Activated B cell treated with CpG ODN at 0.5 μM for 24 hours (primary cell): ENCODE measurements at regions of chr3 and their contacts with region 1.

Region 1: DNA sequence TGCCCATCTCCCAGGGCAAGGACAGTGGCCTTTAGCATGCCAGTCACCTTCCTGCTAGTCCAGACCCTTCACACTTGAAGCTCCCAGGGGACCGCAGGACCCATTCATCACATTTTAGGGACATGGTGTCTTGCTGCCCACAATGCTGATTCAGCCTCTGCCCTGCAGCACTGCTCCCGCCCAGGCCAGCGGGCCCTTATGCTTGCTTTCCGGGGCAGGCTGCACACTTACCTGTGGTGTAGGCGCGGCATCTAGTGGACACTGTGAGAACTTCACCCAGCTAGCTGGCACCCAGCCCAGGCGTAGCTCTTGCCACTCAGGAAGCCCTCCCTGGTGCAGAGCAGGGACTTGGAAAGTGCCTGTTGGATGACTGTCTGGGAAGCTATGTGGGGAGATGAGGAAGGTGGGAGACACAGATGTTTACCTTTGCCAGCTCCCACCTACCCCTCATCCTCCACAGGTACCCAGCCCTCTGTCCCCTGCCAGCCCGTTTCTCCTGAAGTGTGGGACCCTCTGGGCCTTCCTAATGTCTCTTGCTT is 26.2 kb upstream of the NR2C2 start:
- DNase-seq: peak; percentile 72
- ATAC-seq: peak; percentile 98
- H3K4me3 Mint-ChIP-seq: no peak overlapping the region
- H3K27ac Mint-ChIP-seq: no peak overlapping the region
- H3K4me1 Mint-ChIP-seq: no peaks in the 10 kb centered on the region
- H3K27me3 Mint-ChIP-seq: peaks cover 5% of the 10 kb centered on the region
- CTCF ChIP-seq: peak; percentile 40

Region 2: GRCh38 chr3:14203521-14204079 is 717.5 kb before region 1 on chr3:
- CTCF ChIA-PET with region 1: interaction called, 39 read pairs
- POLR2A ChIA-PET with region 1: no interaction called
- intact Hi-C with region 1: no loop called
- DNase-seq: no peak
- ATAC-seq: peak; percentile 74
- H3K4me3 Mint-ChIP-seq: no peak overlapping the region
- H3K27ac Mint-ChIP-seq: peak overlapping the region; percentile 10
- H3K4me1 Mint-ChIP-seq: peaks cover 5% of the 10 kb centered on the region
- H3K27me3 Mint-ChIP-seq: no peaks in the 10 kb centered on the region
- CTCF ChIP-seq: peak; percentile 25

Region 3: GRCh38 chr3:14508961-14509795 is 412.0 kb before region 1 on chr3:
- CTCF ChIA-PET with region 1: interaction called, 7 read pairs
- POLR2A ChIA-PET with region 1: no interaction called
- intact Hi-C with region 1: loop called (anchors 1 kb)
- DNase-seq: peak; percentile 47
- ATAC-seq: no peak
- H3K4me3 Mint-ChIP-seq: no peak overlapping the region
- H3K27ac Mint-ChIP-seq: no peak overlapping the region
- H3K4me1 Mint-ChIP-seq: no peaks in the 10 kb centered on the region
- H3K27me3 Mint-ChIP-seq: peaks cover 8% of the 10 kb centered on the region
- CTCF ChIP-seq: peak; percentile 74

Region 4: GRCh38 chr3:14672588-14672987 is 248.6 kb before region 1 on chr3:
- CTCF ChIA-PET with region 1: interaction called, 16 read pairs
- POLR2A ChIA-PET with region 1: no interaction called
- intact Hi-C with region 1: loop called (anchors 1 kb)
- DNase-seq: no peak
- ATAC-seq: no peak
- H3K4me3 Mint-ChIP-seq: no peak overlapping the region
- H3K27ac Mint-ChIP-seq: no peak overlapping the region
- H3K4me1 Mint-ChIP-seq: no peaks in the 10 kb centered on the region
- H3K27me3 Mint-ChIP-seq: no peaks in the 10 kb centered on the region
- CTCF ChIP-seq: no peak

Region 5: GRCh38 chr3:14791343-14791945 is 129.7 kb before region 1 on chr3:
- CTCF ChIA-PET with region 1: no interaction called
- POLR2A ChIA-PET with region 1: no interaction called
- intact Hi-C with region 1: loop called (anchors 2 kb)
- DNase-seq: no peak
- ATAC-seq: no peak
- H3K4me3 Mint-ChIP-seq: no peak overlapping the region
- H3K27ac Mint-ChIP-seq: no peak overlapping the region
- H3K4me1 Mint-ChIP-seq: no peaks in the 10 kb centered on the region
- H3K27me3 Mint-ChIP-seq: peaks cover 30% of the 10 kb centered on the region
- CTCF ChIP-seq: no peak

Region 6: DNA sequence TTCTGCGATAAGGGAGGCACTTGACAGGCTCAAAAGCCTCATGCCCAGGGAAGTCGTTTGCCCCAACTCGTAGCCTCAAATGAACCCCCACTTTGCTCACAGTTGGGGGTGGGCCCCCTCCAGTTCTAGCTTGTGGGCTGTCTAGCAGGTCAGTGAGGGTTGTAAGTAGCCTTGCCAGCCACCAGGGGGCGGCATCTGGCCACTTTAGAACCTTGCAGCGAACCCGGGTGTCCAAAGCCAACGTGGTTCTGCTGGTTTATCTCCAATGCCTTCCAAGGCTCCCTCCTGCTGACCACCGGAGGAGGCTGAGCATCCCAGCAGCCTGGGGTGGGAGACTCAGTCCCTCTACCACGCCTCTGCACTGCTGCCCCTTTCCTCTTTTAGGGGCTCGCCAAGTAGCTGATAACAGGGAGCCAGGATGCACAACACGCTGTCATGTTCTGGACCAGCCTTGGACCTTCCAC is 187.0 kb after region 1 on chr3:
- CTCF ChIA-PET with region 1: no interaction called
- POLR2A ChIA-PET with region 1: no interaction called
- intact Hi-C with region 1: loop called (anchors 1 kb)
- DNase-seq: peak; percentile 66
- ATAC-seq: peak; percentile 98
- H3K4me3 Mint-ChIP-seq: no peak overlapping the region
- H3K27ac Mint-ChIP-seq: no peak overlapping the region
- H3K4me1 Mint-ChIP-seq: peaks cover 2% of the 10 kb centered on the region
- H3K27me3 Mint-ChIP-seq: peaks cover 7% of the 10 kb centered on the region
- CTCF ChIP-seq: peak; percentile 69